ENCODE measurements at regions of chr1 and their contacts with region 1.

Region 1: GRCh38 chr1:162040681-162041080 is 17.0 kb upstream of the OLFML2B start:
- DNase-seq: no peak
- H3K4me3 Mint-ChIP-seq: no peak overlapping the region
- H3K27ac Mint-ChIP-seq: no peak overlapping the region
- H3K4me1 Mint-ChIP-seq: peaks cover 1% of the 10 kb centered on the region
- H3K27me3 Mint-ChIP-seq: peaks cover 31% of the 10 kb centered on the region

Region 2: GRCh38 chr1:161749509-161750407 is 290.9 kb before region 1 on chr1 and contains the start of gene DUSP12:
- CTCF ChIA-PET with region 1: interaction called, 11 read pairs
- POLR2A ChIA-PET with region 1: no interaction called
- DNase-seq: peak; percentile 89
- H3K4me3 Mint-ChIP-seq: peak within 1 kb of the TSS; percentile 98
- H3K27ac Mint-ChIP-seq: peak within 1 kb of the TSS; percentile 97
- H3K4me1 Mint-ChIP-seq: peaks cover 51% of the 10 kb centered on the region
- H3K27me3 Mint-ChIP-seq: peaks cover 8% of the 10 kb centered on the region
- total RNA-seq, gene DUSP12: 23.4 to 23.5 TPM

Region 3: GRCh38 chr1:161766102-161766981 is 274.3 kb before region 1 on chr1 and contains the start of gene ATF6:
- CTCF ChIA-PET with region 1: interaction called, 21 read pairs
- POLR2A ChIA-PET with region 1: no interaction called
- DNase-seq: peak; percentile 85
- H3K4me3 Mint-ChIP-seq: peak within 1 kb of the TSS; percentile 97
- H3K27ac Mint-ChIP-seq: peak within 1 kb of the TSS; percentile 91
- H3K4me1 Mint-ChIP-seq: peaks cover 60% of the 10 kb centered on the region
- H3K27me3 Mint-ChIP-seq: no peaks in the 10 kb centered on the region
- total RNA-seq, gene ATF6: 19.3 TPM

Region 4: GRCh38 chr1:161772397-161772796 is 268.3 kb before region 1 on chr1:
- CTCF ChIA-PET with region 1: interaction called, 13 read pairs
- POLR2A ChIA-PET with region 1: no interaction called
- DNase-seq: no peak
- H3K4me3 Mint-ChIP-seq: no peak overlapping the region
- H3K27ac Mint-ChIP-seq: no peak overlapping the region
- H3K4me1 Mint-ChIP-seq: peaks cover 28% of the 10 kb centered on the region
- H3K27me3 Mint-ChIP-seq: no peaks in the 10 kb centered on the region

Region 5: GRCh38 chr1:161792740-161793139 is 247.9 kb before region 1 on chr1:
- CTCF ChIA-PET with region 1: interaction called, 97 read pairs
- POLR2A ChIA-PET with region 1: interaction called, 9 read pairs
- DNase-seq: no peak
- H3K4me3 Mint-ChIP-seq: no peak overlapping the region
- H3K27ac Mint-ChIP-seq: peak overlapping the region; percentile 2
- H3K4me1 Mint-ChIP-seq: peaks cover 31% of the 10 kb centered on the region
- H3K27me3 Mint-ChIP-seq: no peaks in the 10 kb centered on the region

Region 6: GRCh38 chr1:162023547-162024501 is 16.9 kb before region 1 on chr1 and contains the start of gene OLFML2B:
- CTCF ChIA-PET with region 1: interaction called, 15 read pairs
- POLR2A ChIA-PET with region 1: no interaction called
- DNase-seq: peak; percentile 53
- H3K4me3 Mint-ChIP-seq: peak within 1 kb of the TSS; percentile 67
- H3K27ac Mint-ChIP-seq: no peak within 1 kb of the TSS
- H3K4me1 Mint-ChIP-seq: peaks cover 8% of the 10 kb centered on the region
- H3K27me3 Mint-ChIP-seq: peaks cover 48% of the 10 kb centered on the region
- total RNA-seq, gene OLFML2B: not detected

Measured in activated CD4-positive, alpha-beta memory T cell treated with anti-CD3 and anti-CD28 coated beads, Interleukin-2, amount 10 ng/mL, durations not matched to agents 7 days and 5 days (primary cell).